Natural killer cell (primary cell): ENCODE measurements at regions of chr3 and their contacts with region 1.

Region 1: DNA sequence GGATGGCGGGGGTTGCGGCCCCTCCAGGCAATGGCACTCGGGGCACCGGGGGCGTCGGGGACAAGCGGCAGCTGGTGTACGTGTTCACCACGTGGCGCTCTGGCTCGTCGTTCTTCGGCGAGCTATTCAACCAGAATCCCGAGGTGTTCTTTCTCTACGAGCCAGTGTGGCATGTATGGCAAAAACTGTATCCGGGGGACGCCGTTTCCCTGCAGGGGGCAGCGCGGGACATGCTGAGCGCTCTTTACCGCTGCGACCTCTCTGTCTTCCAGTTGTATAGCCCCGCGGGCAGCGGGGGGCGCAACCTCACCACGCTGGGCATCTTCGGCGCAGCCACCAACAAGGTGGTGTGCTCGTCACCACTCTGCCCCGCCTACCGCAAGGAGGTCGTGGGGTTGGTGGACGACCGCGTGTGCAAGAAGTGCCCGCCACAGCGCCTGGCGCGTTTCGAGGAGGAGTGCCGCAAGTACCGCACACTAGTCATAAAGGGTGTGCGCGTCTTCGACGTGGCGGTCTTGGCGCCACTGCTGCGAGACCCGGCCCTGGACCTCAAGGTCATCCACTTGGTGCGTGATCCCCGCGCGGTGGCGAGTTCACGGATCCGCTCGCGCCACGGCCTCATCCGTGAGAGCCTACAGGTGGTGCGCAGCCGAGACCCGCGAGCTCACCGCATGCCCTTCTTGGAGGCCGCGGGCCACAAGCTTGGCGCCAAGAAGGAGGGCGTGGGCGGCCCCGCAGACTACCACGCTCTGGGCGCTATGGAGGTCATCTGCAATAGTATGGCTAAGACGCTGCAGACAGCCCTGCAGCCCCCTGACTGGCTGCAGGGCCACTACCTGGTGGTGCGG is 1.9 kb downstream of the CHST2 start:
- DNase-seq: peak; percentile 78 to 85
- ATAC-seq: peak; percentile 60 to 77 (median 68)
- H3K4me3 ChIP-seq: peak overlapping the region; percentile 80
- H3K4me3 Mint-ChIP-seq: peak overlapping the region; percentile 87
- H3K27ac ChIP-seq: peak overlapping the region; percentile 76
- H3K27ac Mint-ChIP-seq: peak overlapping the region; percentile 84 to 90
- H3K4me1 ChIP-seq: peaks cover 44% of the 10 kb centered on the region
- H3K4me1 Mint-ChIP-seq: peaks cover 56 to 64% of the 10 kb centered on the region in 2 donors
- H3K27me3 ChIP-seq: no peaks in the 10 kb centered on the region
- H3K27me3 Mint-ChIP-seq: no peaks in the 10 kb centered on the region
- CTCF ChIP-seq: peak; percentile 79

Region 2: GRCh38 chr3:143236226-143236964 is 114.9 kb after region 1 on chr3:
- intact Hi-C with region 1: loop called (anchors 2 kb)
- DNase-seq: no peak
- ATAC-seq: peak; percentile 54 to 66 (median 58)
- H3K4me3 ChIP-seq: no peak overlapping the region
- H3K4me3 Mint-ChIP-seq: peak overlapping the region; percentile 64
- H3K27ac ChIP-seq: peak overlapping the region; percentile 88
- H3K27ac Mint-ChIP-seq: peak overlapping the region; percentile 92 to 98
- H3K4me1 ChIP-seq: peaks cover 40% of the 10 kb centered on the region
- H3K4me1 Mint-ChIP-seq: peaks cover 72 to 78% of the 10 kb centered on the region in 2 donors
- H3K27me3 ChIP-seq: no peaks in the 10 kb centered on the region
- H3K27me3 Mint-ChIP-seq: no peaks in the 10 kb centered on the region
- CTCF ChIP-seq: no peak

Region 3: DNA sequence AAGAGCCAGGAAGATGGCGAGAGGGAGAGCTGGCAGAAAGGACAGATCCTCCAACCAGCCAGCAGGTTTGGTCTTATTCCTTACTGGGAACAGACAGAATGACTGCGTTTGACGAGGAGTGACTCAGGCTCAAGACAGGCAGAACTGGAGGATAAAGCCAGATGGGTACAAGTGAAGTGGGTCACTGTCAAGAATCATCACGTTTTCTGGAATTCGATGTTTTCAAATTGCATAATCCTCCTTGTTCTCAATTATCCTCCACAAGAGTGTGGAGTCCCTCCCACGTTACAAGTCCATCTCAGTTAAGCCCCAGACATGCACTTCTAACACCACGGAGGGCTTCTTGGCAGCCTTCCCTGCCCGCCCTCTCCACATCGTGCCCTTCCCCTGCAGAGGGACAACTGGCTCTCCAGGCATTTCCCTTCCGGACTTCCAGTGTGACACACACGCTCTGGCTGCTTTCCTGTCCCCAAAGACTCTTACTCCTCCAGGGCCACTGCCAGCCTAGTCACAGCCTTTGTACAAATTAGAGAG is 181.2 kb after region 1 on chr3:
- intact Hi-C with region 1: loop called (anchors 1 kb)
- DNase-seq: no peak
- ATAC-seq: no peak
- H3K4me3 ChIP-seq: no peak overlapping the region
- H3K4me3 Mint-ChIP-seq: peak overlapping the region; percentile 83
- H3K27ac ChIP-seq: no peak overlapping the region
- H3K27ac Mint-ChIP-seq: peak overlapping the region; percentile 80 to 84
- H3K4me1 ChIP-seq: peaks cover 58% of the 10 kb centered on the region
- H3K4me1 Mint-ChIP-seq: peaks cover 89 to 92% of the 10 kb centered on the region in 2 donors
- H3K27me3 ChIP-seq: no peaks in the 10 kb centered on the region
- H3K27me3 Mint-ChIP-seq: no peaks in the 10 kb centered on the region
- CTCF ChIP-seq: no peak

Region 4: GRCh38 chr3:143443851-143444331 is 322.4 kb after region 1 on chr3:
- intact Hi-C with region 1: loop called (anchors 5 kb)
- DNase-seq: peak in 1 of 2 donors; percentile 29
- ATAC-seq: peak; percentile 30 to 48 (median 47)
- H3K4me3 ChIP-seq: no peak overlapping the region
- H3K4me3 Mint-ChIP-seq: no peak overlapping the region
- H3K27ac ChIP-seq: no peak overlapping the region
- H3K27ac Mint-ChIP-seq: peak overlapping the region in 1 of 2 donors; percentile 70
- H3K4me1 ChIP-seq: peaks cover 8% of the 10 kb centered on the region
- H3K4me1 Mint-ChIP-seq: peaks cover 32 to 46% of the 10 kb centered on the region in 2 donors
- H3K27me3 ChIP-seq: no peaks in the 10 kb centered on the region
- H3K27me3 Mint-ChIP-seq: no peaks in the 10 kb centered on the region
- CTCF ChIP-seq: no peak

Region 5: DNA sequence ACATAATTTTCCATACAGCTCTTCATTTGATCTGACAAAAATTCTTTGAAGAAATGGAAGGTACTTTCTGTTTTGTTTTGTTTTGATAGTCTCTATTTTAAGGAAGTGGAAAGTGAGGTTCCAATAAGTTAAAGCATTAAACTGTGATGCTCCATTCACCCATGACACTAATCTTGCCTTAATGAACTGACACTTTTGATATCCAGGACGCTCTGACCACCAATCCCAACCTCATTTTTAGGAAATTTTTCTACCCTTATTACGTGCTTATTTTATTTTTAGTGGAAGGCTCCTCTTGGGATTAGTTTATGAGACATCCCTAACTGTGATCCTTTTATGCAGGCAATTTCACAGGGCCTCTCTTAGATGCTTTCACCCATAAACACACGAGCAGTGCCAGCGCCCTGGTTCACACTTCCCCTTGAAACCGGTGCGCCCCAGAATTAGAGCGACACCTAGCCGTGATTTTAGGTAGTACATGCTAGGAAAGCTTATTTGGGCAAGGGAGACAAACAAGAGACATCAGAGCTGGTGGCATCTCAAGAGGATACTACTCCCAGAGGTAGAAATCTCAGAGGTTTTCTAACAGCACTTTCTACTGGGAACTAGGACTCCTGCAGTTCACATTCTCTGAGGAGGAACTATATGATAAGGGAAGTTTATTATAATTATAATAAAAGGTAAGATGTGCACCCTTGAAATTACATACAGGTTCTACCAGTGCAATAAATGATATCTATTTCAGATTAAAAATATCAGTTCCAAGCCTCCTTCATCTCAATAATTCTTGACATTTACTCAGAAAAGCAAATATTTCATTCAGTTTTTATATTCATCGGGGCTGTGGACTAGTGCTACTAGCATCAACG is 552.9 kb after region 1 on chr3:
- intact Hi-C with region 1: loop called (anchors 1 kb)
- DNase-seq: peak; percentile 55 to 86
- ATAC-seq: peak; percentile 93 to 99 (median 99)
- H3K4me3 ChIP-seq: no peak overlapping the region
- H3K4me3 Mint-ChIP-seq: peak overlapping the region; percentile 71
- H3K27ac ChIP-seq: peak overlapping the region; percentile 40
- H3K27ac Mint-ChIP-seq: peak overlapping the region; percentile 71 to 87
- H3K4me1 ChIP-seq: peaks cover 3% of the 10 kb centered on the region
- H3K4me1 Mint-ChIP-seq: peaks cover 7 to 9% of the 10 kb centered on the region in 2 donors
- H3K27me3 ChIP-seq: no peaks in the 10 kb centered on the region
- H3K27me3 Mint-ChIP-seq: no peaks in the 10 kb centered on the region
- CTCF ChIP-seq: peak; percentile 97